ENCODE measurements at regions of chr15 and their contacts with region 1.

Region 1: DNA sequence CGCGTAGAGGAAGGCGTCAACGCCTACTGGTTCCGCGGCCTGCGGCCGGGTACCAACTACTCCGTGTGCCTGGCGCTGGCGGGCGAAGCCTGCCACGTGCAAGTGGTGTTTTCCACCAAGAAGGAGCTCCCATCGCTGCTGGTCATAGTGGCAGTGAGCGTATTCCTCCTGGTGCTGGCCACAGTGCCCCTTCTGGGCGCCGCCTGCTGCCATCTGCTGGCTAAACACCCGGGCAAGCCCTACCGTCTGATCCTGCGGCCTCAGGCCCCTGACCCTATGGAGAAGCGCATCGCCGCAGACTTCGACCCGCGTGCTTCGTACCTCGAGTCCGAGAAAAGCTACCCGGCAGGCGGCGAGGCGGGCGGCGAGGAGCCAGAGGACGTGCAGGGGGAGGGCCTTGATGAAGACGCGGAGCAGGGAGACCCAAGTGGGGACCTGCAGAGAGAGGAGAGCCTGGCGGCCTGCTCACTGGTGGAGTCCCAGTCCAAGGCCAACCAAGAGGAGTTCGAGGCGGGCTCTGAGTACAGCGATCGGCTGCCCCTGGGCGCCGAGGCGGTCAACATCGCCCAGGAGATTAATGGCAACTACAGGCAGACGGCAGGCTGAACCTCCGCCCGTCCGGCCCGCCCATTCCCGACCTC is 4.1 kb downstream of the ISLR2 start:
- DNase-seq: peak; percentile 51
- CTCF ChIP-seq: peak; percentile 57

Region 2: GRCh38 chr15:74307827-74308644 is 173.5 kb after region 1 on chr15:
- in situ Hi-C with region 1: loop called (anchors 5 kb)
- DNase-seq: peak; percentile 84
- CTCF ChIP-seq: peak; percentile 79

Measured in GM13977 (cell line).